Right cardiac atrium (tissue), 5 donors: ENCODE measurements at regions of chr6 and their contacts with region 1.

Region 1: GRCh38 chr6:130020907-130021629 is 2.7 kb downstream of the L3MBTL3 start:
- DNase-seq: peak; percentile 73 to 85 (median 83)
- ATAC-seq: peak; percentile 86 to 89
- H3K4me3 ChIP-seq: peak overlapping the region; percentile 99
- H3K27ac ChIP-seq: peak overlapping the region; percentile 72
- H3K4me1 ChIP-seq: no peaks in the 10 kb centered on the region
- H3K27me3 ChIP-seq: no peaks in the 10 kb centered on the region

Region 2: GRCh38 chr6:128870746-128871145 is 1150.3 kb before region 1 on chr6:
- intact Hi-C with region 1: no loop called
- DNase-seq: no peak
- ATAC-seq: no peak
- H3K4me3 ChIP-seq: no peak overlapping the region
- H3K27ac ChIP-seq: no peak overlapping the region
- H3K4me1 ChIP-seq: no peaks in the 10 kb centered on the region
- H3K27me3 ChIP-seq: no peaks in the 10 kb centered on the region

Region 3: GRCh38 chr6:129606664-129607063 is 414.4 kb before region 1 on chr6:
- intact Hi-C with region 1: loop called in 2 of 4 experiments (anchors 10 kb)
- DNase-seq: no peak
- ATAC-seq: no peak
- H3K4me3 ChIP-seq: no peak overlapping the region
- H3K27ac ChIP-seq: no peak overlapping the region
- H3K4me1 ChIP-seq: no peaks in the 10 kb centered on the region
- H3K27me3 ChIP-seq: no peaks in the 10 kb centered on the region

Region 4: DNA sequence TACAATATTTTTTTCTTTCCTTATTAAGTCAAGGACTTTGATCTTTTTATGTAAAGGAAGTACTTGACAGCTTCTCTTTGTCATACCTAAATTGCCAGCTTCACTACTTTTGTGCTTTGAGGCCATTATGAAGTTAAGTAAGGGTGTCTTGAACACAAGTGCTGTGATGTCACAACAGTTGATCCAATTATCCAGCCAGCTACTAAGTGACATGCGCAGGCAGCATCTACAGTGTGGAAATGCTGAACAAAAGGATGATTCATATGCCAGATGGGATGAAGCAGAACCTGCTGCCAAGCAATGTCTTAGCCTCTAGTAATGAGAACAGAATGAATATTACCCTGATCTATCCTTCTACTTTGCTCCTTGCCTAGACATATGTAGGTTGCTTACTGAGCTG is 91.6 kb before region 1 on chr6:
- intact Hi-C with region 1: no loop called
- DNase-seq: no peak
- ATAC-seq: no peak
- H3K4me3 ChIP-seq: no peak overlapping the region
- H3K27ac ChIP-seq: no peak overlapping the region
- H3K4me1 ChIP-seq: no peaks in the 10 kb centered on the region
- H3K27me3 ChIP-seq: no peaks in the 10 kb centered on the region

Region 5: DNA sequence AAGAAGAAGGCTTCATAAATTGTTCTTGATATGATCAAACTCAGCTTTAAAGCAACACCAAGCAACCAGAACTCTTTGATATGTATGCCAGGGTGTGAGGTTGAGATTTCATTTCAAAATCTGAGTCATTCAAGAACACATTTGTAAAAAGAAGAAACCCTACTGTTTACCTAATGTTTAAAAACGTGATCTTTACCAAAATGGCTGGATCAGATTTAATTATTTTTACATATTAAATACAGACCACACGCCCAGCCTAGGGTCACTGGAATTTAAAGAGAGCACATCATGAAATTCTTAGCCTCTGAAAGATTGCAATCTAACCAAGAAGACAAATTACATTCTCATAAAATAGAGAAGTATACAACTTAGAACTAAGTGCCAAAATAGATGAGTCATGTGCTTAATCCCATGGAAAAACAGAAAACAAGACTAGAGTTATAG is 599.3 kb after region 1 on chr6:
- intact Hi-C with region 1: no loop called
- DNase-seq: no peak
- ATAC-seq: no peak
- H3K4me3 ChIP-seq: no peak overlapping the region
- H3K27ac ChIP-seq: no peak overlapping the region
- H3K4me1 ChIP-seq: no peaks in the 10 kb centered on the region
- H3K27me3 ChIP-seq: no peaks in the 10 kb centered on the region